ENCODE measurements at regions of chr14 and their contacts with region 1.

Region 1: GRCh38 chr14:22099942-22100763 is 426.5 kb upstream of the OR4E1 start:
- DNase-seq: no peak
- ATAC-seq: peak; percentile 96
- H3K4me3 ChIP-seq: no peak overlapping the region
- H3K27ac ChIP-seq: no peak overlapping the region
- H3K4me1 ChIP-seq: no peaks in the 10 kb centered on the region
- H3K27me3 ChIP-seq: no peaks in the 10 kb centered on the region
- CTCF ChIP-seq: peak; percentile 54 to 90 (median 78)
- EP300 ChIP-seq: no peak
- POLR2A ChIP-seq: no peak
- RAD21 ChIP-seq: peak; percentile 52

Region 2: DNA sequence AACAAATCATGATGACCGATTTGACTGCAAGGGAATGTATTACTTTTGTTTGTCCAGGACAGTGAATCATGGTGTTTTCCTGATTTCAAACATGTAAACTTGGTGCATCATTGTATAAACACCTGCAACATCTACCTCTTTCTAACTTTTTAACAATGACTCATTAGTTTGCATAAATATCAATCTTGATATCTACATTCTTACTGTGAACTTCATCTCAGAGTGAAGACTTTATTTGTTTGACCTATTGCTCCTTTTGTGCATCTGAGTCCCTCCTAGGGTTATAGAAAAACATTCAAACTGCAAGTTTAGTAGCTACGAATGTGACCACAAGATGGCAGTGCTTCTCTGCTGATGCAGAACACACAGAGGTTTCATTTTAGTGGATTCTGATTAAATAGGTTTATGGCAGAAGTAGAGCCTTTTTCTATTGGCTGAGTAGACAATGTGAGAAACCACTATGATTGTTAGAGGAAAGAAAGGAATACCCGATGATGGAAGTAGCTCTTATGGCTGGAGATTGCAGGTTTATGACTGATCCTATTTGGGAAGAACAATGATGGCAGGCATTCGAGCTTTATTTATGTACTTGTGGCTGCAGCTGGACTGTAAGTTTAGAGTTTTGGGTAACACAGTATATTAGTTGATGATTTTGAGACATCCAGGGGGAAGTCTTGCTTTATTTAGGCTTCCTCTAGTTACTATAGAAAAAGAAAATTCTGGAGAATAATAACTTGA is 182.3 kb before region 1 on chr14:
- CTCF ChIA-PET with region 1: no interaction called
- POLR2A ChIA-PET with region 1: no interaction called
- RAD21 ChIA-PET with region 1: no interaction called
- SMC1A ChIA-PET with region 1: no interaction called
- in situ Hi-C with region 1: no loop called
- intact Hi-C with region 1: no loop called
- DNase-seq: peak; percentile 3
- ATAC-seq: peak; percentile 87
- H3K4me3 ChIP-seq: no peak overlapping the region
- H3K27ac ChIP-seq: no peak overlapping the region
- H3K4me1 ChIP-seq: no peaks in the 10 kb centered on the region
- H3K27me3 ChIP-seq: no peaks in the 10 kb centered on the region
- CTCF ChIP-seq: peak; percentile 70 to 89 (median 74)
- EP300 ChIP-seq: no peak
- POLR2A ChIP-seq: no peak
- RAD21 ChIP-seq: peak; percentile 65

Region 3: GRCh38 chr14:22047115-22047514 is 53.0 kb before region 1 on chr14:
- CTCF ChIA-PET with region 1: interaction called, 6 read pairs
- POLR2A ChIA-PET with region 1: no interaction called
- RAD21 ChIA-PET with region 1: interaction called, 3 read pairs
- SMC1A ChIA-PET with region 1: no interaction called
- in situ Hi-C with region 1: no loop called
- intact Hi-C with region 1: loop called (anchors 5 kb)
- DNase-seq: no peak
- ATAC-seq: peak; percentile 89
- H3K4me3 ChIP-seq: no peak overlapping the region
- H3K27ac ChIP-seq: no peak overlapping the region
- H3K4me1 ChIP-seq: no peaks in the 10 kb centered on the region
- H3K27me3 ChIP-seq: no peaks in the 10 kb centered on the region; a peak in 1 of 4 replicates
- CTCF ChIP-seq: peak; percentile 37 to 43 (median 43); a peak in 5 of 6 replicates
- EP300 ChIP-seq: no peak
- POLR2A ChIP-seq: no peak
- RAD21 ChIP-seq: peak; percentile 42

Region 4: DNA sequence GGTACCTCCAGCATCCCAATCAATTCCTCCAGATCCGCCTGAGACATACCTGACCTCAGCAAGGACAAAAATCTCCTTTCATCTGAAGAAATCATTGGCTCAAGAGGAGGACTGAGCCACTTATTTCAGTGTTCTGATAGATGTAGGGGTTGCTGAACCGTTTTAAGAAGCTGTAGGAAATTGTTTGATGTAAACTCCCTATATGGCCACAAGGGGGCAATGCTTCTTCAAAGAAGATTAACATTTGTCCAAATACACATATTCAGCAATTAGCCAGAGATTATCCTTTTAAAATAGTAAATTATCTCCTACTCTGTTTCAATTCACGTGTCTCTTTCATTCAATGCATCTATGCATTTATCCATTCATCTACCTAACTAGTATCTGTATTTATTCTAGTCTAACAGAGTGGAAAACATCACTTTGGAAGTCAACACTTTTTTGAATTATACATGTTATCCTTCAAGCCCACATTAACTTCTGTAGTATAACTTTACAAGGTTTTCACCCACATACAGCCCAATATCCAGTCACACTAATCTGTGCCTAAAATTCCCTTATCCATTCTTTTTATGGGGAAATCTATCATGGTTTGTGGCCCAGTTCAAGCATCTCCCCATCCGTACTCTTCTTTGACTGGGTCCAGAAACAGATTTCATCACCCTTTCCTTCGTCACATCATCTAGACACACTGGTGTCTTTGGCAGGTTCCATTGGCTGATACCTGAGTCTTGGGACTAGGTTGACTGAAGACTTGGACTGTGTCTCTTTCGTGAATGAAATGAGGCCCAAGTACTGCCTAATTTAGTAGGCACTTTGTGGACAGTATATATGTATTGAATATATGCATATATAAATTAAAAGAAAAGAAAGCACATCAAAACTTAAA is 15.5 kb before region 1 on chr14:
- CTCF ChIA-PET with region 1: interaction called, 26 read pairs
- POLR2A ChIA-PET with region 1: no interaction called
- RAD21 ChIA-PET with region 1: interaction called, 4 read pairs
- SMC1A ChIA-PET with region 1: no interaction called
- in situ Hi-C with region 1: no loop called
- intact Hi-C with region 1: loop called (anchors 2 kb)
- DNase-seq: peak; percentile 8
- ATAC-seq: peak; percentile 63
- H3K4me3 ChIP-seq: no peak overlapping the region
- H3K27ac ChIP-seq: no peak overlapping the region
- H3K4me1 ChIP-seq: no peaks in the 10 kb centered on the region
- H3K27me3 ChIP-seq: no peaks in the 10 kb centered on the region
- CTCF ChIP-seq: peak; percentile 64 to 71 (median 67); a peak in 5 of 6 replicates
- EP300 ChIP-seq: no peak
- POLR2A ChIP-seq: no peak
- RAD21 ChIP-seq: peak; percentile 52

Region 5: DNA sequence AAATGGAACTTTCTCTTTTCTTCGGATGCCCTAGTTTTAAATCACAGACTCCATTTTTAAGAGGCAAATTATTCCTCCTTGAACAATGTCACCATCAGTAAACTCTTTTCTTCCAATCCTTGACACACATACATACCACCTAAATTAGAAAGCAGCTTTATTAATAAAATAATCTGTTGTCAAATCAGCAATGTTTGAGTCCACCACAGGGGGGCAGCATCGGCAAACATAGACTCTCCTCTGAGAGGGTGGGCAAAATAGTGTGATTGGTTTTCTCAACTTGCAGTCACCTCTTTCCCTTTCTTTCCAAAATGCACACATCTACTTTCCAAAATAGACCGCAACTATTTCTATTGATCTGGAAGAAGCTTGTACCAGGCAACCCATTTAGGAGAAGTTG is 11.9 kb after region 1 on chr14:
- CTCF ChIA-PET with region 1: interaction called, 32 read pairs
- POLR2A ChIA-PET with region 1: no interaction called
- RAD21 ChIA-PET with region 1: interaction called, 3 read pairs
- SMC1A ChIA-PET with region 1: no interaction called
- in situ Hi-C with region 1: no loop called
- intact Hi-C with region 1: no loop called
- DNase-seq: no peak
- ATAC-seq: peak; percentile 67
- H3K4me3 ChIP-seq: no peak overlapping the region
- H3K27ac ChIP-seq: no peak overlapping the region
- H3K4me1 ChIP-seq: peaks cover 3% of the 10 kb centered on the region; the same call in 1 of the 2 replicates
- H3K27me3 ChIP-seq: no peaks in the 10 kb centered on the region
- CTCF ChIP-seq: peak; percentile 37 to 63 (median 53); a peak in 5 of 6 replicates
- EP300 ChIP-seq: no peak
- POLR2A ChIP-seq: no peak
- RAD21 ChIP-seq: peak; percentile 60

Measured in GM12878 (cell line).